ENCODE measurements at regions of chr10 and their contacts with region 1.

Region 1: GRCh38 chr10:79400146-79401004 is 45.0 kb downstream of the ZCCHC24 start:
- DNase-seq: peak; percentile 58
- H3K4me3 ChIP-seq: no peak overlapping the region
- H3K27ac ChIP-seq: peak overlapping the region; percentile 72 to 89
- H3K4me1 ChIP-seq: no peaks in the 10 kb centered on the region
- H3K27me3 ChIP-seq: no peaks in the 10 kb centered on the region
- CTCF ChIP-seq: peak; percentile 24 to 55 (median 32)
- POLR2A ChIP-seq: no peak

Region 2: DNA sequence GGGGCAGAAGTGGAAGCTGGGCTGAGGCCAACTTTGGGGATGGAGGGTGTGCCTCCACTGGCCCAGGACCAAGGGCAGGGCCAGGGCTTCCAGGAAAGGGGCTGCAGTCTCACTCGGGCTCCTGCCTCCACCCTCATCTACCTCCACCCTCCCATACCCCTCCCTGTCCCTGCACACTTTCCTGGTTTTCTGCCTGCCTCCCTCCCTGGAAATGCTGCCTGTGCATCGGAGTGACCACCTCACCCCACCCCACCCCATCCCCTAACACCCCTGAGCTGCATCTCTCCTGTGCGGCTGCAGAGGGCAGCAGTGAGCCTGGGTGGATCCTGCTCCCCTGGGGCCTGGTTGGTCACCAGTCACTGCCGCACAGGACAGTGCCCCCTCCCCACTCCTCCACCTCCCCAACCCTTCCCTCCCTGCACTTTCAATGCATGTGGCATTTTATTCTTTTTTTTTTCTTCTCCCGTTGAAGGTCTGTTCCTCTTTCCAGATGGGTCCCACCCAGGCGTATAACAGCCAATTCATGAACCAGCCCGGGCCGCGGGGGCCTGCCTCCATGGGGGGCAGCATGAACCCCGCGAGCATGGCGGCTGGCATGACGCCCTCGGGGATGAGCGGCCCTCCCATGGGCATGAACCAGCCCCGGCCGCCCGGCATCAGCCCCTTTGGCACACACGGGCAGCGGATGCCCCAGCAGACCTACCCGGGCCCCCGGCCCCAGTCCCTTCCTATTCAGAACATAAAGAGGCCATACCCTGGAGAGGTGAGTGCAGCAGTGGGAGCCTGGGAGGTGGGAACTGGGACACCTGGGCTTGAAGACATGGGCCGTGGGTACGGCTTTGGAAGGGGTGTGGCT is 107.3 kb before region 1 on chr10:
- intact Hi-C with region 1: no loop called
- DNase-seq: no peak
- H3K4me3 ChIP-seq: no peak overlapping the region
- H3K27ac ChIP-seq: peak overlapping the region in 1 of 2 donors; percentile 0
- H3K4me1 ChIP-seq: no peaks in the 10 kb centered on the region
- H3K27me3 ChIP-seq: no peaks in the 10 kb centered on the region
- CTCF ChIP-seq: no peak
- POLR2A ChIP-seq: no peak

Region 3: GRCh38 chr10:79463578-79464496 is 63.5 kb after region 1 on chr10:
- intact Hi-C with region 1: loop called (anchors 10 kb)
- DNase-seq: peak; percentile 48
- H3K4me3 ChIP-seq: no peak overlapping the region
- H3K27ac ChIP-seq: no peak overlapping the region
- H3K4me1 ChIP-seq: peaks cover 24% of the 10 kb centered on the region
- H3K27me3 ChIP-seq: no peaks in the 10 kb centered on the region
- CTCF ChIP-seq: no peak
- POLR2A ChIP-seq: no peak